Panc1 (cell line): ENCODE measurements at regions of chr5 and their contacts with region 1.

Region 1: DNA sequence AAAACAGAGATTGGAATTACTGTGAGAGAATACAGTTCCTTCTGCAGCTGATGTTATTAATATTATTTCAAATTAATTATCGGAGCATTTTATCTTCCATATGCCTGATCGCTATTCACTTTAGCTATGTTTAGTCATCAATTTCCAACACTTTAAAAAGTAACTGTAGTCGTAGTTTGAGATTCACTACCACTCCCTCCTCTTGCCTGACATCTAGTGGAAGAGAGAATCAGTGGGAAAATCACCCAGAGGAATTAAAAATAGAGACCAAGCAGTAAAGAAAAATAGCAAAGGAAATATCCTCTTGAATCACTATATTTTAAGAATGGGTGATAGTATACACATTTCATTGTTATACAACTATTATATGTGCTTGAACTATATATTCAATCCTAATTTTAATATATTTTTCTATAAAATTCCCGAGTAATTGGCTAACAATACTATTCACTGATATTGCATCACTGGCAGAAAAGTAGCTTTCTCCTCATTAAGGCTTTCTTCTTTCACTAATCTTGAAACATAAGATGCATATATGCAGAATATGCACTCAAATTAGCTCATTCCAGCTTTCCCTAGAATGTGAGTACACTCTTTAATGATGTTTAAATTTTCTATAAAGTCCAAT is 708.7 kb downstream of the CDH9 start:
- DNase-seq: peak; percentile 5
- ATAC-seq: peak; percentile 65; the same call in 1 of the 2 replicates
- H3K4me3 ChIP-seq: no peak overlapping the region
- H3K27ac ChIP-seq: no peak overlapping the region; the same call in 1 of the 2 replicates
- H3K4me1 ChIP-seq: no peaks in the 10 kb centered on the region
- H3K27me3 ChIP-seq: no peaks in the 10 kb centered on the region
- CTCF ChIP-seq: peak; percentile 71; the same call in 1 of the 2 replicates

Region 2: GRCh38 chr5:25025831-25026230 is 1303.8 kb before region 1 on chr5:
- CTCF ChIA-PET with region 1: no interaction called
- POLR2A ChIA-PET with region 1: no interaction called
- in situ Hi-C with region 1: no loop called
- intact Hi-C with region 1: no loop called
- DNase-seq: no peak
- ATAC-seq: no peak
- H3K4me3 ChIP-seq: no peak overlapping the region
- H3K27ac ChIP-seq: no peak overlapping the region
- H3K4me1 ChIP-seq: no peaks in the 10 kb centered on the region
- H3K27me3 ChIP-seq: no peaks in the 10 kb centered on the region
- CTCF ChIP-seq: no peak

Region 3: GRCh38 chr5:26482810-26483375 is 153.2 kb after region 1 on chr5:
- CTCF ChIA-PET with region 1: no interaction called
- POLR2A ChIA-PET with region 1: no interaction called
- in situ Hi-C with region 1: no loop called
- intact Hi-C with region 1: loop called (anchors 10 kb)
- DNase-seq: peak; percentile 46
- ATAC-seq: peak; percentile 96
- H3K4me3 ChIP-seq: peak overlapping the region; percentile 30 to 44
- H3K27ac ChIP-seq: peak overlapping the region; percentile 63; the same call in 1 of the 2 replicates
- H3K4me1 ChIP-seq: no peaks in the 10 kb centered on the region
- H3K27me3 ChIP-seq: no peaks in the 10 kb centered on the region
- CTCF ChIP-seq: peak; percentile 81